Psoas muscle (tissue), 8 donors: ENCODE measurements at regions of chr17 and their contacts with region 1.

Region 1: GRCh38 chr17:14926526-14927122 is 338.5 kb downstream of the PMP22 start:
- DNase-seq: peak in 1 of 2 donors; percentile 15
- ATAC-seq: no peak
- H3K4me3 ChIP-seq: no peak overlapping the region
- H3K27ac ChIP-seq: no peak overlapping the region
- H3K4me1 ChIP-seq: no peaks in the 10 kb centered on the region
- H3K27me3 ChIP-seq: no peaks in the 10 kb centered on the region
- CTCF ChIP-seq: peak; percentile 73

Region 2: DNA sequence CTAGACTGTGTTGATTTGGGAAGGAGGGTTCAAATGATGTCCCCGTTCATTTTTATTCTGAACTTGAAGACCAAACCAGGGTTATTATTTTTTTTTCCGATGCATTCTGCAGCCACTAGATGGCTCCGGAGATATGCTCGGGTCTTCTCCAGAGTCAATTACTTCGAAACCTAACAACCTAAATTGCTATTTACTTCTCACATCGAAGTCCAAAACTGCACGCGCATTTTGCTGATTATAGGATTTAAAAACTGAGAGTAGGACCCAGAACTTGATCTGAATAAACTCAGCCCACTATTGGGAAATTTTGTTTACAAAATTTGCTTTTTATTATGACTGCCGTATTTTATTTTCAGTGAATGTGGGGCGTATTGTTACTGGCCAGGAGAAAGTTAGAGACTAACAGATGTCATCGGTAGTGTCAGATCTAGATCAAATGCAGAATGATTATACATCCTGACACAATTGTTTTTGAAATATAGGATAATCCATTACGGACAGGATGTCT is 1588.7 kb before region 1 on chr17:
- intact Hi-C with region 1: loop called (anchors 5 to 10 kb)
- DNase-seq: no peak
- ATAC-seq: no peak
- H3K4me3 ChIP-seq: peak overlapping the region; percentile 38
- H3K27ac ChIP-seq: no peak overlapping the region
- H3K4me1 ChIP-seq: no peaks in the 10 kb centered on the region
- H3K27me3 ChIP-seq: no peaks in the 10 kb centered on the region
- CTCF ChIP-seq: peak; percentile 58

Region 3: GRCh38 chr17:13346996-13347765 is 1579.4 kb before region 1 on chr17:
- intact Hi-C with region 1: loop called in 1 of 2 experiments (anchors 10 kb)
- DNase-seq: no peak
- ATAC-seq: no peak
- H3K4me3 ChIP-seq: no peak overlapping the region
- H3K27ac ChIP-seq: no peak overlapping the region
- H3K4me1 ChIP-seq: no peaks in the 10 kb centered on the region
- H3K27me3 ChIP-seq: no peaks in the 10 kb centered on the region
- CTCF ChIP-seq: no peak

Region 4: DNA sequence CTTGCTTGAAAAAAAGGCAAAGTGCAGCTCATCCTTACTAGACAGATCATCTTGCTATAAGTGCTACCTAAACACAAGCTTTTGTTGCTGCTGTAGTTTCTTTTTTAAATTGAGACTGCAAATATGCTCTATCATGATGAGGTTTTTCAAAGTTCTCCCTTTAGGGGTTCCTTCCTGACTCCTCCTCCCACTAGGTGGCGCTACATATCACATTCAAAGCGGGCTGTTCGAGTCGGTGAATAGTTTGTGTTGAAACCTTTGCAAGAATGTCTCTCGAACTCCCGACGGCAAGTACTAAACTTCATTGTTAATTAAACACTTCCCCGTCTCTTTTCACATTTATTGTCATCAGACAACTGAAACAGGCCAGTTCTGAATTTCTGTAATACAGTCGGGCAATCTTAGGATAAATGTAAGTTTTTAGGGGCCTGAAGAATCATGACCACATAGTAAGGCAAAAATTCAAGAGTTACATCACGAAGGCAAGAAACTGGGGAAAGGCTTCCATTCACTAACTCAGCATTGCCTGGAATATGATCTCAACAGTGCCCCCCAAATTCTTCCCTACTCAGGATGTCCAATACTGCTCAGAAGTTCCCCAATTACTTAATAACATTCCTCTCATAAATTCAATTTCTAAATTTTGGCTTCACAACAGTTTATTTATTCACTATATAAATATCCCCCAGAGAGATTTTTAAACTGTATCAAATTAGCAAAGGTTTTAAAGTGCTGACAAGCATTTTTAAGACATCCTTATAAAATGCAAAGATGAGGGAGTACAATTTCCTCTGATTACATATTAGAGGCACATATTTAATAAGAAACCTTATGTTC is 1331.6 kb before region 1 on chr17:
- intact Hi-C with region 1: loop called (anchors 5 kb)
- DNase-seq: peak; percentile 51 to 66
- ATAC-seq: peak in 3 of 4 donors; percentile 65 to 86 (median 82)
- H3K4me3 ChIP-seq: no peak overlapping the region
- H3K27ac ChIP-seq: no peak overlapping the region
- H3K4me1 ChIP-seq: peaks cover 11% of the 10 kb centered on the region
- H3K27me3 ChIP-seq: peaks cover 0 to 24% (median 0%) of the 10 kb centered on the region in 3 donors
- CTCF ChIP-seq: peak; percentile 89